ENCODE measurements at regions of chr6 and their contacts with region 1.

Region 1: DNA sequence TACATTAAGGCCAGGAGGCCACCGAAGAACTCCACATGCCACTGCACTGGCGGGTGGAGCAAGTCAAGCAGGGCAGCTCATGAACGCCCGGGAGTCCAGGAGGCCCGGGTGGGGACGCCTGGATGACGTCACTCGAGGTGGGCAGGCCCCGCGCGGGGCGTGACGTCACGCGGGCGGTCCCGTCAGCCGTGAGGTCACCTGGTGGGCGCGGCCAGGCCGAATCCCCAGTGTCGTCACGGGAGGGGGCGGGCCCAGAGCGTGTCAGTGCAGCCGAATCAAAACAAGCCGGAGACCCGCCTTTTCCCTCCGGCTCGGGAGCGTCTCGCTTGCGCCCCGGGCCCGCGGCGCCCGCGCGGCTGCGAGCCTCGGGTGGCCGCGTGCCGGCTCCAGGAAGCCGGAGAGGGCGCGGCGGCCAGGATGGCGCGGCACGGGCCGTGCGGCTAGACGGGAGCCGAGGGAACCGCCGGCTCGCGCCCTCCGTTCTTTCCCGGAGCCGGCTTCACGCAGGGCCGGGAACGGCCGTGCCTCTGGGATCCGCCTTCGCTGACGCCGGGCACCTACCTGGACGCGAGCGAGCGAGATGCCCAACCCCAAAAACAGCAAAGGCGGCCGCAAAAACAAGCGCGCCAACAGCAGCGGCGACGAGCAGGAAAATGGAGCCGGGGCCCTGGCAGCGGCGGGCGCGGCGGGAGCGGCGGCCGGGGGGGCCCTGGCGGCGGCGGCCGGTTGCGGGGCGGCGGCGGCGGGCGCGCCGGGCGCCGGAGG is at the start of gene HECA:
- DNase-seq: peak; percentile 99
- H3K4me3 Mint-ChIP-seq: peak within 1 kb of the TSS; percentile 82
- H3K27ac Mint-ChIP-seq: peak within 1 kb of the TSS; percentile 96
- H3K4me1 Mint-ChIP-seq: peaks cover 57% of the 10 kb centered on the region
- H3K27me3 Mint-ChIP-seq: no peaks in the 10 kb centered on the region
- total RNA-seq, gene HECA: 78.9 to 81.7 TPM

Region 2: DNA sequence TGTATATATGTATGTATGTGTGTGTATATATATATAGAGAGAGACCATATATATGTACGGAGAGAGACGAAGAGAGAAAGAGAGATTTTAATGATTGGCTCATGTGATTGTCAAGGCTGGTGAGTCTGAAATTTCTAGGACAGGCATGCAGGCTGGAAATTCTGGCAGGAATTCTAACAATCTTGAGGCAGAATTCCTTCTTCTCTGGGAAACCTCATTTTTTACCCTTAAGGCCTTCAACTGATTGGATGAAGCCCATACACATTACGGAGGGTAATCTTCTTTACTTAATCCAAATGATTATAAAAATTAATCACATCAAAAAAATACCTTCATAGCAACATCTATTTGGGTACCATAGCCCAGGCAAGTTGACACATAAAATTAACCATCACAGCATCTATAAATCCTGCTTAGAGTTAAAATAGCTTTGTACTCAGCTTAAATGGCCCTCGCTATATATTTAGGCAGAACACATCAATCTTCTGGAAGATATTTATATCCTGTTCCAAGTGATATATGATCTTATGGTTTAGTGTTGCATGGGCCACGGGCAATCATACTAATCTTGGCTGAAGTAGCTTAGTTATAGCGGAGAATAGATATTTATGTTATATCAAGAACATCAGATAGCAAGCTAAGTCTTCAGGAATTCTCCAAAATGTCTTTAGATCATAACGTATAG is 69.9 kb before region 1 on chr6:
- CTCF ChIA-PET with region 1: no interaction called
- POLR2A ChIA-PET with region 1: no interaction called
- DNase-seq: no peak
- H3K4me3 Mint-ChIP-seq: no peak overlapping the region
- H3K27ac Mint-ChIP-seq: no peak overlapping the region
- H3K4me1 Mint-ChIP-seq: peaks cover 2% of the 10 kb centered on the region
- H3K27me3 Mint-ChIP-seq: no peaks in the 10 kb centered on the region

Region 3: GRCh38 chr6:139109558-139109957 is 25.4 kb before region 1 on chr6:
- CTCF ChIA-PET with region 1: interaction called, 4 read pairs
- POLR2A ChIA-PET with region 1: interaction called, 10 read pairs
- DNase-seq: peak; percentile 38
- H3K4me3 Mint-ChIP-seq: no peak overlapping the region
- H3K27ac Mint-ChIP-seq: no peak overlapping the region
- H3K4me1 Mint-ChIP-seq: peaks cover 28% of the 10 kb centered on the region
- H3K27me3 Mint-ChIP-seq: no peaks in the 10 kb centered on the region

Region 4: GRCh38 chr6:139153855-139154254 is 18.9 kb after region 1 on chr6:
- CTCF ChIA-PET with region 1: interaction called, 7 read pairs
- POLR2A ChIA-PET with region 1: interaction called, 119 read pairs
- DNase-seq: no peak
- H3K4me3 Mint-ChIP-seq: no peak overlapping the region
- H3K27ac Mint-ChIP-seq: peak overlapping the region; percentile 23
- H3K4me1 Mint-ChIP-seq: peaks cover 77% of the 10 kb centered on the region
- H3K27me3 Mint-ChIP-seq: no peaks in the 10 kb centered on the region

Region 5: DNA sequence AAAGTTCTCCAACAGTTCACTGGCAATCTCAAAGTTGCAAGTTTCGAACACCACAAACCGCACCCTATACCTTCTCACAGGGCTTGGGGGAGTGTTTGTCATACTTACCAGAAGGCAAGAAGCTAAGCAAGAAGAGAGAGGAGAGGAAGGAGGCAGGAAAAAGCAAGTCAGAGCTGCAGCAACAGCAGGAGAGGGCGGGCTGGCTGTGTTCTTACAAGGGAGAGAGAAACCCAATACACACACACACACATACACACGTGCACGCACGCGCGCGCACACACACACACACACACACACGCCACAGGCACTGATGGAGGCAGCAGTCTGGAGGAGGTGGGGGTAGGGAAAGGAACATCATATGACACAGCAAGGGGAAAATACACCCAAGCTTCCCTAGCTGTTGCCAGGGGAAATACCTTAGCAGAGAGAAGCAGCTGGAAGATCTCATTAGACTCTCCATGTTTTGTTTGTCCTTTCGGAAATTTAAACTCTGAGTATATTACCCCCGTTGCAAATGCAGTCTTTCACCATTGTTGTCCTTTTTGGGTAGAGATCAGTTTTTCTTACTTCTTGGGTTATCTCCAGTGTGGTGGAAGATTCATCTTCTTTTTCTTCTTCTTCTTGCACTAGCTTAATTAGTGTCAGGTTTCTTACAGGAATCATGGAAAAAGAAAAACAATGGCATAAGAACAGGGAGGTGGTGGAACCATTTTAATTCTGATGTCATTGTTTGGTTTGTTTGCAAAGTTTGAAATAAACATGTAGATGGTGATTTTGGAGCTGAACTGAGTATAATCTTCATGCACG is 157.0 kb after region 1 on chr6 and contains the start of gene TXLNB:
- CTCF ChIA-PET with region 1: interaction called, 3 read pairs
- POLR2A ChIA-PET with region 1: interaction called, 17 read pairs
- DNase-seq: peak; percentile 89
- H3K4me3 Mint-ChIP-seq: peak within 1 kb of the TSS; percentile 74
- H3K27ac Mint-ChIP-seq: peak within 1 kb of the TSS; percentile 96
- H3K4me1 Mint-ChIP-seq: peaks cover 32% of the 10 kb centered on the region
- H3K27me3 Mint-ChIP-seq: no peaks in the 10 kb centered on the region
- total RNA-seq, gene TXLNB: 0.60 to 0.90 TPM

Measured in activated CD4-positive, alpha-beta memory T cell treated with anti-CD3 and anti-CD28 coated beads, Interleukin-2, amount 10 ng/mL, durations not matched to agents 7 days and 5 days (primary cell).